Body of pancreas (tissue), 4 donors: ENCODE measurements at regions of chr11 and their contacts with region 1.

Region 1: DNA sequence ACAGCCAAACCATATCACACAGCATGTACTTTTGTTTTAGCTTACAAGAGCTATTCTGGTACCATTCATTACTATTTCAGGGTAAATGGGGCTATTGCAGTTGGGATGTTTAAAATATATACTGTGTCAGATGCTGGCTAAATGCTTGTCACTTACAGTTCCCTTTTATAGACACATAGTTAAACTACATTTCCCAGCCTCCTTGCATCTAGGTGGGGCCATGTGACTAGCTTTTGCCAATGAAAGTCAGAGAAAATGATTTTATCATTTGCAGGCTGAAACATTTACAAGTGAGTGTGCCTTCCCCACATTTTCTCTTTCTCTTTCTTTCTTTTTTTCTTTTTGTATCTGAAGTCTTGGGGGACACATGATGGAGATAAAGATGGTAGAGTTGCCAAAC is 7.8 kb upstream of the IFTAP start:
- DNase-seq: no peak
- ATAC-seq: no peak
- H3K4me3 ChIP-seq: no peak overlapping the region
- H3K27ac ChIP-seq: no peak overlapping the region
- H3K4me1 ChIP-seq: no peaks in the 10 kb centered on the region
- H3K27me3 ChIP-seq: no peaks in the 10 kb centered on the region
- CTCF ChIP-seq: no peak
- POLR2A ChIP-seq: no peak

Region 2: DNA sequence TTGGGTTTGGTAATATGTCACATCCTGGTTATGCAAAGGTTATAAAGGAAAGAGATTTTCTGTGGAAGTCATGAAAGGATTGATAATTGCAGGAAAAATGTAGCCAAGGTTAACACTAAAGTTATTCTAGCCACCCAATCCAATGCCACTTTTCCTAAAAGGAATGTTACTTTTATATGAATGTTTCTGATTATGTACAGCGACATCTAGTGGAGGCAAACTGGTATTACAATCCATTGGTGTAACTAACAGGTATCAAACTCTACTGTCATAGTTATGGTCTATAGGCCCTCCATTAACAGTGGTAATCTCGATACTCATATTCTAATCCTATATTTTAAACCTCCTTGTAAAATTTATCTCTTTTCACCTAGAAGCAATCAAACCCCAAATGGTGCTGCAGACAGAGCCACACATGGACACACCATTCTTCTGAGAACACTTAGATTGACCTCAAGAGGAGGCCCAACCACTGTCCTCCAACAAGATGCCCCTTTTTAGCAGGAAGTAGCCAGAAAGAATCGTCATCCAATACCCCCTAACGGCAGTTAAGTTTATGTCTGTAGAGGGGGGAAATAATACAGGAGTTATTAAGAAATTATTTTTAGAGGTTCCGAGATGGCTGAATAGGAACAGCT is 86.4 kb after region 1 on chr11:
- intact Hi-C with region 1: loop called (anchors 10 kb)
- DNase-seq: peak in 3 of 4 donors; percentile 13 to 54 (median 30)
- ATAC-seq: peak; percentile 30
- H3K4me3 ChIP-seq: no peak overlapping the region
- H3K27ac ChIP-seq: no peak overlapping the region
- H3K4me1 ChIP-seq: no peaks in the 10 kb centered on the region
- H3K27me3 ChIP-seq: no peaks in the 10 kb centered on the region
- CTCF ChIP-seq: peak; percentile 51 to 78 (median 76)
- POLR2A ChIP-seq: no peak

Region 3: DNA sequence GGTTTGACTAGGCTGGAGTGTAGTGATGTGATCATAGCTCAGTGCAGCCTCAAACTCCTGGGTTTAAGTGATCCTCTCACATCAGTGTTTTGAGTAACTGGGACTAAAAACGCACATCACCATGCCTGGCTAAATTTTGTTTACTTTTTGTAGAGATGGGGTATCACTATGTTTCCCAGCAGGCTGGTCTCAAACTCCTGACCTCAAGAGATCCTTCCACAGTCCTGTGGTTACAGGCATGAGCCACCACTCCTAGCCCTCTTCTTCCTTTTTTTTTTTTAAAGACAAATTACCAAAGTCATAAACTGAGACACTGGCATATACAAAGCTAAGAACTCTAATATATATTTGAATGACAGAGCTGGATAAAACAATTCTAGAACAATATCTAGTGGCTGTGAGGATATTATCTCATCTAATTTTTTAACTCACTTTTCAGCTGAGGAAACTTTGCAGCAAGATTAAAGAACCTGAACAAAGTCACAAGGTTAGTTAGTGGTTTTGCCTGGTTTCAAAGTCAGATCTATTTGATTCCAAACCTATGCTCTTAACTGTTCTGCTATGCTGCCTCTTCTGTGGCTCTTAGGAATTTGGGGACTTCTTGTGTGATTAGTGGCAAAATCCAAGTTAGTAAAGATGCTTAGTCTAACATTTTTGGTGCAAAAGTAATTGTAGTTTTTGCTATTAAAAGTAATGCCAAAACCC is 106.7 kb after region 1 on chr11:
- intact Hi-C with region 1: no loop called
- DNase-seq: no peak
- ATAC-seq: no peak
- H3K4me3 ChIP-seq: no peak overlapping the region
- H3K27ac ChIP-seq: no peak overlapping the region
- H3K4me1 ChIP-seq: no peaks in the 10 kb centered on the region
- H3K27me3 ChIP-seq: no peaks in the 10 kb centered on the region
- CTCF ChIP-seq: no peak
- POLR2A ChIP-seq: no peak